ENCODE measurements at regions of chr15 and their contacts with region 1.

Region 1: DNA sequence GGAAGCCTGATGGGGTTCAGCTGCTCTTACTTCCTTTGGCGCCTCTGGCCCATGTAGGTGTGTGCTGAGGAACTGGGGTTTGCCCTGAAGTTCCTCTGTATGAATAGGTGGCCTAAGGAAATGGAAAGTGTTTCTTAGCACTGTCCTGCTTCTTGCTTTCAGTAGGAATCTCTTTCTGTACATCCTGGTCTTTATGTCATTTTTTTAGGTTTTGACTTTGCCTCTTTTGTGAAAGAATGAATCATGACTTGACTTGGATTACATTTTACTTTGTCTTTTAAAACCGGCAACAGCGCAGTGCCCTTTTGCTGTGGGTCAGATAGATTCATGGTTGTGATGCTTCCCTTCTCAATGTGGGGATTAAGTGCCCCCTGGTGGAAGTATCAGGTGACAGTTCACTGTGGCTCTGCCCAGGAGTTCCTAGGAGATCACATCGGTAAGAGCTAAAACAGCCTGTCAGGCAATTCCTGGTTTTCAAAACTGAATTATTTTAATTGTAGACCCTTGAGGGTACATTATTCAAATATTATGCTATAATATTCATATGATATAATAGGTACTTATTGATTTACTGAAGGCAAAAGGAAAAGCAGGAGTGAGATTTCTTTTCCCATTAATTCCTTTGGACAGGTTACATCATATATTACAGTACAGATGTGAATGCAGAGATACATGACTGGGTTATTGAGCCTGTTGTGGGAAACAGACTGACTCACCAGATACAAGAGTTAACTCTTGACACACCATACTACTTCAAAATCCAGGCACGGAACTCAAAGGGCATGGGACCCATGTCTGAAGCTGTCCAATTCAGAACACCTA is 95.4 kb downstream of the HCN4 start:
- DNase-seq: peak; percentile 37 to 50 (median 43)
- H3K4me3 ChIP-seq: no peak overlapping the region
- H3K4me3 Mint-ChIP-seq: peak overlapping the region in 4 of 8 donors; percentile 6 to 76 (median 32)
- H3K27ac ChIP-seq: no peak overlapping the region
- H3K27ac Mint-ChIP-seq: peak overlapping the region in 1 of 7 donors; percentile 67
- H3K4me1 ChIP-seq: no peaks in the 10 kb centered on the region
- H3K4me1 Mint-ChIP-seq: peaks cover 0 to 5% (median 3%) of the 10 kb centered on the region in 4 donors
- H3K27me3 ChIP-seq: no peaks in the 10 kb centered on the region
- H3K27me3 Mint-ChIP-seq: no peaks in the 10 kb centered on the region

Region 2: GRCh38 chr15:72009222-72009621 is 1264.2 kb before region 1 on chr15:
- CTCF ChIA-PET with region 1: no interaction called
- POLR2A ChIA-PET with region 1: no interaction called
- intact Hi-C with region 1: no loop called
- DNase-seq: no peak
- H3K4me3 ChIP-seq: no peak overlapping the region
- H3K4me3 Mint-ChIP-seq: no peak overlapping the region
- H3K27ac ChIP-seq: no peak overlapping the region
- H3K27ac Mint-ChIP-seq: peak overlapping the region in 2 of 7 donors; percentile 21 to 40
- H3K4me1 ChIP-seq: no peaks in the 10 kb centered on the region
- H3K4me1 Mint-ChIP-seq: no peaks in the 10 kb centered on the region
- H3K27me3 ChIP-seq: no peaks in the 10 kb centered on the region
- H3K27me3 Mint-ChIP-seq: no peaks in the 10 kb centered on the region

Region 3: DNA sequence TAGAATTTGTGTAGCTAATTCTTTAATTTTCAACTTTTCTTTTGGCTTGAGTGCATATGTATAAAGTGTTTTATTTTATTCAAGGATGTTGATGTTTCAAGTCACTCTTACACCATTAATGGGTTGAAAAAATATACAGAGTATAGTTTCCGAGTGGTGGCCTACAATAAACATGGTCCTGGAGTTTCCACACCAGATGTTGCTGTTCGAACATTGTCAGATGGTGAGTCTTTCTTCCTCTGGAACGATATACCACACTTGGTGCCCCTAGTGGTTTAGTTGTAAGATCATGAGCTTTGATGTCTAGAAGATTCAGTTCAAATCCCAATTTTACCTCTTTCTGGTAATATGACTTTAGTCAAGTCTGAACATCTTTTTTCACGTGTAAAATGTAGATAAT is 23.9 kb before region 1 on chr15:
- CTCF ChIA-PET with region 1: interaction called, 17 read pairs
- POLR2A ChIA-PET with region 1: no interaction called
- intact Hi-C with region 1: no loop called
- DNase-seq: no peak
- H3K4me3 ChIP-seq: no peak overlapping the region
- H3K4me3 Mint-ChIP-seq: no peak overlapping the region
- H3K27ac ChIP-seq: no peak overlapping the region
- H3K27ac Mint-ChIP-seq: no peak overlapping the region
- H3K4me1 ChIP-seq: no peaks in the 10 kb centered on the region
- H3K4me1 Mint-ChIP-seq: no peaks in the 10 kb centered on the region
- H3K27me3 ChIP-seq: no peaks in the 10 kb centered on the region
- H3K27me3 Mint-ChIP-seq: no peaks in the 10 kb centered on the region

Region 4: DNA sequence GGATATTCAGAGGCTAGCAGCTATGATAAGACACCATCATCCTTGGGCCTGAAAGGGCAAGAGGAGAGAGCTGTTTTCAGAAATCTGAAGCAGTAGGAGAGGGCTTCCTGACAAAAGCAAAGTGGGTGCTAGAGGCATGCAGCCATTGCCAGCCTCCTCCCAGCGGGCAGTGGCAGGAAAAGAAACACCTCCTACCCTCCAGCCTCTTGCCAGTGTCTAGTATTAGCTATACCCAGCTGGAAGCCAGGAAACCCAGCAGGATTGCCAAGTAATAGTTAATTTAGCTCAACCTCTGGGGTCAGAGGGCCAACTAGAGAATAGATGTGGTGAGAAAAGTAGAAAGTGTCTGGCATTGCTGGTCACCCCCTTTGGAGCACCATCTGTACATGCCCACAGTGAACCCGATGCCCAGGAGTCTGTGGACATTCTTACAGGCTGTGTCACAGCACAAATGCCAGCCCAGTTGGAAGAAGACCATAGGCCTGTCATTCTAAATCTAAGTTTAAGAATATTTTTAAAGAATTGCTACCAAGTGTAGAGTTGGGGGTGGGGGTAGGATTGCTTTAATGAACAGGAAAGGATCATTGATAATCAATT is 10.1 kb after region 1 on chr15:
- CTCF ChIA-PET with region 1: interaction called, 16 read pairs
- POLR2A ChIA-PET with region 1: no interaction called
- intact Hi-C with region 1: no loop called
- DNase-seq: no peak
- H3K4me3 ChIP-seq: no peak overlapping the region
- H3K4me3 Mint-ChIP-seq: no peak overlapping the region
- H3K27ac ChIP-seq: no peak overlapping the region
- H3K27ac Mint-ChIP-seq: peak overlapping the region in 1 of 7 donors; percentile 72
- H3K4me1 ChIP-seq: no peaks in the 10 kb centered on the region
- H3K4me1 Mint-ChIP-seq: peaks cover 0 to 2% (median under 1%) of the 10 kb centered on the region in 4 donors
- H3K27me3 ChIP-seq: no peaks in the 10 kb centered on the region
- H3K27me3 Mint-ChIP-seq: no peaks in the 10 kb centered on the region

Region 5: DNA sequence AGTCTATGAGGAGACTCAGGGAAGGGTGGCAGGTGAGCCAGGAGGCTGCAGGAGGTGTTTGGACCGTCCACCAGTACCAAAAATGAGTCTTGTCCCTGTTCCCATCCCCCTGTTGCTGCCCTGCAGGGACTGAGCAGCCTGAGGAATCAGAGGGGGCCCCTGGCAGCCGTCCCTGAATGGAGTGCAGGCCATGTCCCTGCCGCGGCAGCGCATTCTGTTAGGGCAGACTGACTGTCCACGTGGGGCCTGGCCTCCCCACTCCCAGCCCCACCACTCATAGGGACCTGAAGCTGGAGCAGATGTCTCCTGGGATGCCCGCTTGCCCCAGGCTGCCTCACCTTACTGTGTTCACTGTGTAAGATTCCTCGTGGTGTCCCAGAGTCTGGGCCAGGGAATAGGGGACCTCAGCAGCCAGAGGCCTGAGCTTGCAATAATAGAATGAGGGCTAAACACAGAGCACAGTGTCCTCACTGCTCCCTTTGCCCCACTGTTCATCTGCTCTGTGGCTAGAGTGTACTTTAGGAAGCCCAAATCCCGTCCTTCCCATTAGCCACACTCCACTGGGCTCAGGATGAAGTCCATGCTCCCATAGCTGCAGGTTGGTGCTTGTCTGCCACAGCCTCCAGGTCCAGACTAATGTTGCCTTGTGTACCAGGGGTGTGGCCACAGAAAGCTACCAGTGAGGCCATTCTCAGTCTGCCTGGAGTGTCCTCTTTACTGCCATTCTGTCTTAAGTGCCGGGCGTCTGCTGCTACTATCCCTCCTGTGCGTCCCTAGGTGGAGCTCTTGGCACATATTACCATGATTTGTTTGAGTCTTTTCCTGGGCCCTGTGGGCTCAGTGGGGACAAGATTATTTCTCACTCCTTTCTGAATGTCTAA is 32.2 kb after region 1 on chr15:
- CTCF ChIA-PET with region 1: no interaction called
- POLR2A ChIA-PET with region 1: no interaction called
- intact Hi-C with region 1: no loop called
- DNase-seq: peak in 3 of 5 donors; percentile 9 to 18 (median 12)
- H3K4me3 ChIP-seq: no peak overlapping the region
- H3K4me3 Mint-ChIP-seq: no peak overlapping the region
- H3K27ac ChIP-seq: no peak overlapping the region
- H3K27ac Mint-ChIP-seq: peak overlapping the region in 1 of 7 donors; percentile 30
- H3K4me1 ChIP-seq: no peaks in the 10 kb centered on the region
- H3K4me1 Mint-ChIP-seq: no peaks in the 10 kb centered on the region
- H3K27me3 ChIP-seq: no peaks in the 10 kb centered on the region
- H3K27me3 Mint-ChIP-seq: no peaks in the 10 kb centered on the region

Measured in CD4-positive, alpha-beta memory T cell (primary cell).